ENCODE measurements at regions of chr3 and their contacts with region 1.

Region 1: GRCh38 chr3:123328851-123329635 is 119.8 kb downstream of the ADCY5 start:
- DNase-seq: peak; percentile 45 to 84 (median 73)
- ATAC-seq: peak; percentile 76
- H3K4me3 ChIP-seq: no peak overlapping the region
- H3K4me3 Mint-ChIP-seq: no peak overlapping the region
- H3K27ac ChIP-seq: no peak overlapping the region
- H3K27ac Mint-ChIP-seq: no peak overlapping the region
- H3K4me1 ChIP-seq: no peaks in the 10 kb centered on the region
- H3K4me1 Mint-ChIP-seq: no peaks in the 10 kb centered on the region
- H3K27me3 ChIP-seq: peaks cover 0 to 2% of the 10 kb centered on the region in 2 experiments
- H3K27me3 Mint-ChIP-seq: peaks cover 9% of the 10 kb centered on the region
- CTCF ChIP-seq: peak; percentile 87

Region 2: DNA sequence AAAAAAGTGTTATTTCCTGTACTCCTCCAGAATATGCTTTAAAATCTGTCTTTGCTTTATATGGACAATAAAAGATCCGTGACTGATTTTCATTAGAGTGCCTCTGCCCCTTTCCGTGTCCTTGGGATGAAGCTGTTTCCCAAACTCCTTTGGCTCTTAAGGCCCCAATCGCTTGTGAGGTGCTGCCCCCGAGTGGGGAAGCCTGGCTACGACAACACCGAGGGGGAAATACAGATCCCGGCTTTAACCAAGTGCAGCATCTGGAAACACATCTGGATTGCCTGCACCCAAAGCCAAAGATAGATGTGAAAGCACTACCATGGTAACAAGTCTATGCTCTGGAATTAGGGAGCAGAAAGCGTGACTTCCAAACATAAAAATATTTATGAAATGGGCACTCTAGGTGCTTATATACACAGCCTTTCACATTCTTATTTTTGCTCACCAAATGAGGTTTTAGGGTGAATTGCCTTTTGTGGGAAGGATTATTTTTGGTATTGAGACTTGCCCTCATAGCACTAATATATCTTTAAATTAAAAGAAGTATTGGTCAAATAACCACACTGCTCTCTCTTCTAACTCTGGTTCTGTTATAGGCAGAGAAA is 160.5 kb after region 1 on chr3:
- CTCF ChIA-PET with region 1: interaction called, 5 read pairs
- POLR2A ChIA-PET with region 1: no interaction called
- intact Hi-C with region 1: loop called in 1 of 2 experiments (anchors 1 kb)
- DNase-seq: peak in 6 of 9 experiments; percentile 10 to 53 (median 37)
- ATAC-seq: no peak
- H3K4me3 ChIP-seq: no peak overlapping the region
- H3K4me3 Mint-ChIP-seq: no peak overlapping the region
- H3K27ac ChIP-seq: no peak overlapping the region
- H3K27ac Mint-ChIP-seq: no peak overlapping the region
- H3K4me1 ChIP-seq: no peaks in the 10 kb centered on the region
- H3K4me1 Mint-ChIP-seq: peaks cover 5% of the 10 kb centered on the region
- H3K27me3 ChIP-seq: no peaks in the 10 kb centered on the region
- H3K27me3 Mint-ChIP-seq: peaks cover 3% of the 10 kb centered on the region
- CTCF ChIP-seq: peak; percentile 64

Region 3: DNA sequence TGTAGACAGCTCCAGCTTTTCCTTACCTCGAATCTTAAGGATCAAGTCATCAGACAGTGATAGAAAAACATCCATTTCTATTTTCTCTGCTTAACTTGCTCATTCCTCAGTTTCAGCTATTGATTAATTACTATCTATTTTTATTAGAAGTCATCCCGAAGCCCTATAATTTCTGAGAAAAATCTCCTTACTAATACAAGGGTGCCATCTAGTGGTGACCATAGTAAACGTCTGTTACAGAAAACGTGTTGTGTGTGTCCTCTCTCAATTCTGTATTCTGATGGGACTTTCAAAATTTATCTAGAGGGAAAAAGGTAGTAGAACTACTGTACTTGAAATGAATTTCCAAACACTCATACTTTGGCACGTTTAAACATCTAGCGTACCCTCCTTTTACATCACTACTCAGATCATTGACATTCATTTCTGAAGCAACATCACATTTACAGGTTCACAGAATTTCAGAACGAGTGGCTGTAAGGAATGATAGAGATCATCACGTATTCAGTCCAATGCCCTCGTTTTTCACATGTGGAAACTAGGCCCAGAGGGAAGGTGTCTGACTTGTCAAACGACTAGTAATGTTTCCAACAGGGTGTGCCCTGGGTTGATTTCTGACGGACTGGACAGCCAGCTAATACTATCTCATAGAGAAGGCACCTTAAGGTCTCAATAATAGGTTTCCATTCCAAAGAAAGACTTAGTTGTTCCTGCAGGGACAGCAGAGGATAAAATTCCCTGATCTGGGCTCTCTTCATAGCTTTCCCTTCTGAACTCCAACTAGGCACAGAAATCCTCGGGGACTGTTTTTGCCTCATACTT is 230.2 kb after region 1 on chr3:
- CTCF ChIA-PET with region 1: interaction called, 137 read pairs
- POLR2A ChIA-PET with region 1: no interaction called
- intact Hi-C with region 1: loop called (anchors 1 kb)
- DNase-seq: peak in 3 of 9 experiments; percentile 12 to 73 (median 64)
- ATAC-seq: no peak
- H3K4me3 ChIP-seq: no peak overlapping the region
- H3K4me3 Mint-ChIP-seq: no peak overlapping the region
- H3K27ac ChIP-seq: no peak overlapping the region
- H3K27ac Mint-ChIP-seq: no peak overlapping the region
- H3K4me1 ChIP-seq: no peaks in the 10 kb centered on the region
- H3K4me1 Mint-ChIP-seq: no peaks in the 10 kb centered on the region
- H3K27me3 ChIP-seq: no peaks in the 10 kb centered on the region
- H3K27me3 Mint-ChIP-seq: no peaks in the 10 kb centered on the region
- CTCF ChIP-seq: peak; percentile 98

Region 4: DNA sequence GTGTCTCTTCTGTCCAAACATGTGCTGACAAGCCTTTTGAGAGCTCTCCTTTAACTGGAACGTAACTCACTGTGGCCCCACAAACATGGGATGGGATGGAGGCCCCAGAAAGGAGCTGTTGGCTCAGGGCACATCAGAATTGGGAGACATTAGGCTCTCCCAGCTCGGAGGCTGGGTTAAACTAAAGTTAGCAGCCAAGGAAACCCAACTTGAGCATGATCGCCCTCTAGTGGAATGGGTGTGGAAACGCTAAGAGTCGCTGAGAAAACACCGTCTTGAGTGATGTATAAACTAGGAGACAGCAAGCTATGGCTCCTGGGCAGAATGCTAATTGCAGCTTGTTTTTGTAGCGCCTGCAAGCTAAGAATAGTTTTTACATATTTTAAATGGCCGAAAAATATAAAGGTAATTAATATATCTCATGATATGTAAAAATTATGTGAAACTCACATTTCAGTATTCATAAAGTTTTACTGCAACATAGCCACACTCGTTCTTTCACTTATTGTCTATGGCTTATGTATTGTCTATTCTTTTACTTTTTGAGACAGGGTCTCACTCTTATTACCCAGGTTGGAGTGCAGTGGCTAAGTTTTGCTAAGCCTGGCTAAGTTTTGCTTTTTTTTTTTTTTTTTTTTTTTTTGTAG is 394.6 kb after region 1 on chr3:
- CTCF ChIA-PET with region 1: no interaction called
- POLR2A ChIA-PET with region 1: no interaction called
- intact Hi-C with region 1: loop called in 1 of 2 experiments (anchors 5 kb)
- DNase-seq: peak in 7 of 9 experiments; percentile 6 to 66 (median 31)
- ATAC-seq: peak; percentile 51
- H3K4me3 ChIP-seq: no peak overlapping the region
- H3K4me3 Mint-ChIP-seq: no peak overlapping the region
- H3K27ac ChIP-seq: no peak overlapping the region
- H3K27ac Mint-ChIP-seq: no peak overlapping the region
- H3K4me1 ChIP-seq: no peaks in the 10 kb centered on the region
- H3K4me1 Mint-ChIP-seq: no peaks in the 10 kb centered on the region
- H3K27me3 ChIP-seq: no peaks in the 10 kb centered on the region
- H3K27me3 Mint-ChIP-seq: peaks cover 6% of the 10 kb centered on the region
- CTCF ChIP-seq: peak; percentile 73